A549 (cell line): ENCODE measurements at regions of chr6 and their contacts with region 1.

Region 1: GRCh38 chr6:10465629-10466504 is 51.0 kb upstream of the TFAP2A start:
- DNase-seq: peak; percentile 33 to 72
- ATAC-seq: peak; percentile 73 to 85; a peak in 5 of 6 replicates
- H3K4me3 ChIP-seq: no peak overlapping the region
- H3K27ac ChIP-seq: peak overlapping the region; percentile 70 to 81
- H3K4me1 ChIP-seq: peaks cover 27% of the 10 kb centered on the region
- CTCF ChIP-seq: peak; percentile 63
- EP300 ChIP-seq: no peak
- POLR2A ChIP-seq: no peak; the same call in 1 of the 2 replicates
- RAD21 ChIP-seq: peak; percentile 57 to 67

Region 2: DNA sequence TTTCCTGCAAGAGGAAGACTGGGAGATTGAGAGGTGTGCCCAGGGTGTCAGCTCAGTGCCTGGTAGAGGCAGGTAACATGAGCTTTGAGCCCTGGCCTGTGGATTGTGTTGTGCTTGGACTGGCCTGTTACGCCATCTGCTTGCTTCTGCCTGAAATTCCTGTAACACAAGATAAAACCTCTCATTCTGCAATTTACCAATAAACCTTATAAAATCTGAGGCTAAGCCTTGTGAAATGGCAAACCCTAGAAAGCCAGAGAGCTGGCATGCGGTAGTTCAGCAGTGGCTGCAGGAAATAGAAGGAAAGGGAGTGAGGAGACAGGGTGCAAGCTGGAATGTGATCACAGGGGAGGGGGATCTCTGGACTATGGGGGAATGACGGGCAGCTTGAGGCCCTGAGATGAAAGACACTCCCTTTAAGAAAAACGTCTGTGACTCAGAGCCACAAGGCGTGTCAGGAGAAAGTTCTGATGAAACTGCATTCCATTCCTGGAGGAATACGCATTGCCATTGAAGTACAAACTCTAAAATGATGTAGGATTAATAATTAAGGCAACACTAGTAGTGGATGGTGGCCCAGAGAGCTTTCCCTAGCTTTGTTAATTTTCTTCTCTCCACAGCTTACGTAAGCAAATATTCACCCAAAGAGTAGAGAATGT is 24.7 kb before region 1 on chr6:
- CTCF ChIA-PET with region 1: interaction called, 14 read pairs
- POLR2A ChIA-PET with region 1: no interaction called
- DNase-seq: peak; percentile 84 to 98
- ATAC-seq: peak; percentile 95 to 98
- H3K4me3 ChIP-seq: no peak overlapping the region
- H3K27ac ChIP-seq: peak overlapping the region; percentile 92 to 97
- H3K4me1 ChIP-seq: peaks cover 27% of the 10 kb centered on the region
- CTCF ChIP-seq: no peak
- EP300 ChIP-seq: peak; percentile 83 to 94; a peak in 3 of 5 replicates
- POLR2A ChIP-seq: no peak
- RAD21 ChIP-seq: peak; percentile 18 to 35; a peak in 3 of 5 replicates

Region 3: GRCh38 chr6:10451828-10452509 is 13.9 kb before region 1 on chr6:
- CTCF ChIA-PET with region 1: interaction called, 26 read pairs
- POLR2A ChIA-PET with region 1: no interaction called
- DNase-seq: peak; percentile 81 to 98
- ATAC-seq: peak; percentile 98 to 100
- H3K4me3 ChIP-seq: no peak overlapping the region
- H3K27ac ChIP-seq: peak overlapping the region; percentile 88 to 99
- H3K4me1 ChIP-seq: peaks cover 35% of the 10 kb centered on the region
- CTCF ChIP-seq: no peak
- EP300 ChIP-seq: peak; percentile 66 to 82; a peak in 3 of 5 replicates
- POLR2A ChIP-seq: no peak
- RAD21 ChIP-seq: peak in 1 of 2 experiments; percentile 24; a peak in 1 of 5 replicates

Region 4: DNA sequence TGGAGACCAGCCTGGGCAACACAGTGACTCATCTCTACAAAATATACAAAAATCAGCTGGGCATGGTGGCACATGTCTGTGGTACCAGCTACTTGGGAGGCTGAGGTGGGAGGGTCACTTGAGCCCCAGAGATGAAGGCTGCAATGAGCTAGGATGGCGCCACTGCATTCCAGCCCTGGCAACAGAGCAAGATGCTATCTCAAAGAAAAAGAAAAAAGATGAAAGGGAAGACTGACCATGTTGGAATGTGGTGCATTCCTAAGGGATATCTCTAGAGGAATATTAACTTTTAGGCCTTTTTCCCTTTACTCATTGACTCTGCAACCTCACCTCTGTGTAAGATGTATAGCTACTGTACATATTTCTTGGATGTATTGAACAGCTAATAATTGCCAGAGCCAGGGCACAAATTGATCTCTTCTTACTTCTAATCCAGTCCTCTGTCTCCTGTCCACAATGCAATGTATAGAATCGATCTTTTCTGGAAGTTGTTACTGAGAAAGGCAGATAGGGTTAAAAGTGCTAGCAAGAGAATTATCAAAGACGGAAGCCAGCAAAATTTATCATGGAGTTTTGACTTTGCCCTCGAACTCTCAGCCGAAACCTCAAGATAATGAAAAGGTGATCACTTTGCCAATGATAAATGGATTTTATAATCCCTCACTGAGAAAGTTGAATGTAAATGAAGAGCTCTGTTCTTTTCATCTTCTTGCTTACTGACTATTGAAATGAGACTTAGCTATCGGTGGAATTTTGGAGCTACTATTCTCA is 101.6 kb after region 1 on chr6:
- CTCF ChIA-PET with region 1: no interaction called
- POLR2A ChIA-PET with region 1: no interaction called
- DNase-seq: peak in 1 of 2 experiments; percentile 38
- ATAC-seq: peak; percentile 50 to 69; a peak in 4 of 6 replicates
- H3K4me3 ChIP-seq: no peak overlapping the region
- H3K27ac ChIP-seq: no peak overlapping the region
- H3K4me1 ChIP-seq: peaks cover 6% of the 10 kb centered on the region; the same call in 1 of the 3 replicates
- CTCF ChIP-seq: no peak
- EP300 ChIP-seq: no peak
- POLR2A ChIP-seq: no peak
- RAD21 ChIP-seq: no peak